ENCODE measurements at regions of chr18 and their contacts with region 1.

Region 1: GRCh38 chr18:30623401-30624065 is 419.0 kb downstream of the DSC3 start:
- DNase-seq: no peak
- ATAC-seq: no peak
- H3K4me3 ChIP-seq: no peak overlapping the region
- H3K27ac ChIP-seq: no peak overlapping the region
- H3K4me1 ChIP-seq: no peaks in the 10 kb centered on the region
- H3K27me3 ChIP-seq: no peaks in the 10 kb centered on the region
- CTCF ChIP-seq: no peak
- POLR2A ChIP-seq: no peak

Region 2: DNA sequence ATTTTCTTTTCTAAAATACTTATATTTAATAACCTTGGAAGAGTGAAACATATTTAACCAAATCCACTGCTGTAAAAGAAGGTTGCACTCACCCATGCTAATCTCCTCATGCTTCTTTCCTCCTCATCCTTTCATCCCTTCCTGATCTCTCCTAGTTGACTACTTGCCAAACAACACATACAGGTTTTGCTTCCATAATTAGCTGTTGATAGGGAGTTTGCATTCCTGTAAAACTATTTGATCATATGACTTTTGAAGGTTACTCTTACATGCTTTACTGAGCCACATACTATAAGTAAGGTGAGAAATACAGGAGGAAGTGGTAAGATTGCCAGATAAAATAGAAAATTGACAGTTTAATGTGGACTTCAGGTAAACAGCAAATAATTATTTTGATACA is 64.5 kb before region 1 on chr18:
- intact Hi-C with region 1: no loop called
- DNase-seq: no peak
- ATAC-seq: no peak
- H3K4me3 ChIP-seq: no peak overlapping the region
- H3K27ac ChIP-seq: no peak overlapping the region
- H3K4me1 ChIP-seq: no peaks in the 10 kb centered on the region
- H3K27me3 ChIP-seq: no peaks in the 10 kb centered on the region
- CTCF ChIP-seq: no peak
- POLR2A ChIP-seq: no peak

Region 3: GRCh38 chr18:30676053-30676480 is 52.5 kb after region 1 on chr18:
- intact Hi-C with region 1: loop called in 2 of 10 experiments (anchors 10 kb)
- DNase-seq: no peak
- ATAC-seq: no peak
- H3K4me3 ChIP-seq: no peak overlapping the region
- H3K27ac ChIP-seq: no peak overlapping the region
- H3K4me1 ChIP-seq: peaks cover 0 to 3% (median 0%) of the 10 kb centered on the region in 12 donors
- H3K27me3 ChIP-seq: no peaks in the 10 kb centered on the region
- CTCF ChIP-seq: no peak
- POLR2A ChIP-seq: no peak

Measured in heart left ventricle (tissue), 16 donors.